ENCODE measurements at regions of chr7 and their contacts with region 1.

Region 1: DNA sequence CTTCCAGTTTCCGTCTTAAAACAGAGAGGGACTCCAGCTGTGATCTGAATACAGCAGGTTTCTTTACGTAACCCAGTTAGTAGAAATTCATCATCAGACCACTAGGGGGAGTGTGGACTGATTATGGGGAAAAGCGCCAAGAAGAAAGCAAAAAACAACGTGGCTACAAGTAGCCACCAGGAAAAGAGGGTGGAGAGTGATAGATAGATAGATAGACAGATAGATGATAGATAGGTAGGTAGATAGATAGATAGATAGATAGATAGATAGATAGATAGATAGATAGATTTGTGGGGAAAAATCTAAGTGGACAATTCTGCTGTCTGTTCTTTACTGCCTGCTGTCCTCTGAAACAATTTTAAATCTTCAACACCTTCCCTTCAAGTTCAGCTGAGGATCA is 12.7 kb upstream of the AKR1B10 start:
- DNase-seq: peak in 2 of 4 donors; percentile 36 to 63
- ATAC-seq: peak; percentile 81
- H3K4me3 ChIP-seq: no peak overlapping the region
- H3K27ac ChIP-seq: no peak overlapping the region
- H3K4me1 ChIP-seq: peaks cover 0 to 4% of the 10 kb centered on the region in 2 donors
- H3K27me3 ChIP-seq: peaks cover 0 to 11% of the 10 kb centered on the region in 2 donors
- CTCF ChIP-seq: peak; percentile 62 to 80

Region 2: GRCh38 chr7:133950855-133951254 is 563.8 kb before region 1 on chr7:
- intact Hi-C with region 1: no loop called
- DNase-seq: peak in 1 of 4 donors; percentile 30
- ATAC-seq: no peak
- H3K4me3 ChIP-seq: no peak overlapping the region
- H3K27ac ChIP-seq: no peak overlapping the region
- H3K4me1 ChIP-seq: no peaks in the 10 kb centered on the region
- H3K27me3 ChIP-seq: no peaks in the 10 kb centered on the region
- CTCF ChIP-seq: no peak

Region 3: DNA sequence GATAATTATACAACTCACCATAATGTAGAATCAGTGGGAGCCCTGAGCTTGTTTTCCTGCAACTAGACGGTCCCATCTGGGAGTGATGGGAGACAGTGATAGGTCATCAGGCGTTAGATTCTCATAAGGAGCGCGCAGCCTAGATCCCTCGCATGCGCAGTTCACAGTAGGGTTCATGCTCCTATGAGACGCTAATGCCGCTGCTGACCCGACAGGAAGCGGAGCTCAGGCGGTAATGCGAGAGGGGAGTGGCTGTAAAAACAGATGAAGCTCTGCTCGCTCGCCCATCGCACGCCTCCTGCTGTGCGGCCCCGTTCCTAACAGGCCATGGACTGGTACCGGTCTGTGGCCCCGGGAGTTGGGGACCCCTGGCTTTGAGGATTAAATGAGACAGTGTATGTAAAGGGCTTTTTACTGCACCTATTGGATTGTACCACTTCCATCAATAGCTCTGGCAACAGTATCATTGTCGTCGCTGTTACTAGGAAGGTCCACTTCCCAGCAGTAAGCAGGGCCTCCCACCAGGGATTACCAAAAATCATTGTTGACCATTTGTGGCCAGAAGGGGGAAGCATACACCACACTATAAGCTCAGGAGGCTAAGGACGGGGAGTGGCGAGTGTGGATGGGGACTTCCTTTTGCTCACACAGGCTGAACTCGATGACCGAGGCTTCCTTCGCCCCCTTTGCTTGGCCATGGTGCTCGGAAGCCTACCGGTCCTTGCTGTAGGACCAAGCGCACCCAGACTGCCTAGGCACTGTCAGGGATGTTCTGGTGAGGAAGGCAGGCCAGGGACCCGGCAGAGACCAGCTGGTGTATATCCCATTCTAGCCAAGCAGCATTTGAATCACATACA is 82.1 kb before region 1 on chr7:
- intact Hi-C with region 1: loop called in 1 of 2 experiments (anchors 5 kb)
- DNase-seq: peak; percentile 85 to 93 (median 90)
- ATAC-seq: peak; percentile 99
- H3K4me3 ChIP-seq: peak overlapping the region; percentile 18 to 19
- H3K27ac ChIP-seq: peak overlapping the region; percentile 75 to 81
- H3K4me1 ChIP-seq: peaks cover 0 to 12% of the 10 kb centered on the region in 2 donors
- H3K27me3 ChIP-seq: peaks cover 0 to 8% of the 10 kb centered on the region in 2 donors
- CTCF ChIP-seq: peak; percentile 67 to 70

Region 4: GRCh38 chr7:134602881-134603451 is 88.3 kb after region 1 on chr7:
- intact Hi-C with region 1: loop called in 1 of 2 experiments (anchors 5 kb)
- DNase-seq: peak in 2 of 4 donors; percentile 17 to 32
- ATAC-seq: peak; percentile 51
- H3K4me3 ChIP-seq: no peak overlapping the region
- H3K27ac ChIP-seq: peak overlapping the region; percentile 47 to 71
- H3K4me1 ChIP-seq: peaks cover 0 to 11% of the 10 kb centered on the region in 2 donors
- H3K27me3 ChIP-seq: no peaks in the 10 kb centered on the region
- CTCF ChIP-seq: no peak